ENCODE measurements at regions of chr7 and their contacts with region 1.

Region 1: DNA sequence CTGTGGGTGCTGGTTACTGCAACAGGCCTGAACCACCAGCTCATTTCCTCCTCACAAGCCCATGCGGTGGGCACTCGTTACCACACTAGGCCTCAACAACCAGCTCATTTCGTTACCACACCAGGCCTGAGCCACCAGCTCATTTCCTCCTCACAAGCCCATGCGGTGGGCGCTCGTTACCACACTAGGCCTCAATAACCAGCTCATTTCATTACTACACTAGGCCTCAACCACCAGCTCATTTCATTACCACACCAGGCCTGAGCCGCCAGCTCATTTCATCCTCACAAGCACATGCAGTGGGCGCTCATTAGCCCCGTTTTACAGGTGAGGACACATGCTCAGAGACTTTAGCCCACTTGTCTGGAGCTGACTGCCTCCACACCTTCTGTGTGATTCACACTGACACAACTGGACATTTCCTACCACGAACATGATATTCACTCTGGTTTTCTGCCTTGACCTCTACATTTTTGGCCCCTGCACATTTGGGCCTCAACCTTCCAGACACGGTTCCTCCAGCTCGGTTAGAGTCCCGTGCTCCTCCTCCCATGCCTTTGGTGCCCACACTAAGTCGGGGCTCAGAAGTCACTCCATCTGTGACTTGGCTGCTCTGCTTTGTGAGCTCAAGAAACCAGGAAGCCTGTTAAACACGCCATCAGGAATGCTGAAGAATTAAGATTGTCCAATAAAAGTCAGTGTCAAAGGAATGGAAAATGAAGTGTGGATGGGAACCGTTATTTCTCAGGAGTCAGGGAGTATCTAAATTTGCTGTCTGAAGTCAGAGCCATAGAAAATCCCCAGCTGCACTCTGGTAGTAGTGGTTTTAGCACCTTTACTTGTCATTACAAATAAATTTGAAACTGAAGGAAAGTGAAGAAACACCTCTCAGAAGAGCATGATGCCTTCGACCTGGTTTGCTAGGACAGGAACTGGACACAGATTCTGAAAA is 55.8 kb upstream of the LANCL2 start:
- DNase-seq: peak; percentile 96
- ATAC-seq: peak; percentile 86
- H3K4me3 Mint-ChIP-seq: peak overlapping the region; percentile 51
- H3K27ac Mint-ChIP-seq: peak overlapping the region; percentile 84
- H3K4me1 Mint-ChIP-seq: peaks cover 48% of the 10 kb centered on the region
- H3K27me3 Mint-ChIP-seq: peaks cover 72% of the 10 kb centered on the region

Region 2: DNA sequence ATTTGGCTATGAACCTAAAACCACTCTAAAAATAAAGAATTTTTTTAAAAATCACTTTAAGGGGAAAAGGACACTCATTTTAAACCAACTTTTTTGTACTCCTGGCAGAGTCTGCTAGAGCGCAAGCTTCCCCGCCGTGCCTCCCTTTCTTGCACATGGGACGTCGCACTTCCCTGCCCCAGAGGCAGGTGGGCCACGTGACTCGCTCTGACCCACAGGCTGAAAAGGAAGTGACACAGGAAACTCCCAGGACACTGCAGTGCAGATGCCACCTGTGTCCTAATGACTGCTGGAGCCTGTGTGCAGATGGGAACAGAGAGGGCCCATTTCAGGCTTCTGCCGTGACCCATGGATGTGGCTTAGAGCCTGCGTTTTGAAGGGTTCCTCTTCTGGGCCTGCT is 86.3 kb before region 1 on chr7:
- CTCF ChIA-PET with region 1: no interaction called
- DNase-seq: no peak
- ATAC-seq: no peak
- H3K4me3 Mint-ChIP-seq: no peak overlapping the region
- H3K27ac Mint-ChIP-seq: no peak overlapping the region
- H3K4me1 Mint-ChIP-seq: no peaks in the 10 kb centered on the region
- H3K27me3 Mint-ChIP-seq: peaks cover 3% of the 10 kb centered on the region

Region 3: GRCh38 chr7:55365675-55366460 is 56.6 kb after region 1 on chr7:
- CTCF ChIA-PET with region 1: interaction called, 16 read pairs
- DNase-seq: peak; percentile 95
- ATAC-seq: peak; percentile 89
- H3K4me3 Mint-ChIP-seq: peak overlapping the region; percentile 89
- H3K27ac Mint-ChIP-seq: peak overlapping the region; percentile 91
- H3K4me1 Mint-ChIP-seq: peaks cover 26% of the 10 kb centered on the region
- H3K27me3 Mint-ChIP-seq: peaks cover 3% of the 10 kb centered on the region

Region 4: GRCh38 chr7:55534175-55534915 is 225.0 kb after region 1 on chr7:
- CTCF ChIA-PET with region 1: interaction called, 17 read pairs
- DNase-seq: peak; percentile 91
- ATAC-seq: peak; percentile 77
- H3K4me3 Mint-ChIP-seq: peak overlapping the region; percentile 51
- H3K27ac Mint-ChIP-seq: peak overlapping the region; percentile 88
- H3K4me1 Mint-ChIP-seq: peaks cover 81% of the 10 kb centered on the region
- H3K27me3 Mint-ChIP-seq: peaks cover 10% of the 10 kb centered on the region